Head of caudate nucleus (tissue), 42 donors: ENCODE measurements at regions of chr9 and their contacts with region 1.

Region 1: GRCh38 chr9:4366591-4367330 is 66.9 kb upstream of the GLIS3 start:
- DNase-seq: peak; percentile 29 to 87 (median 68)

Region 2: GRCh38 chr9:3746296-3747275 is 620.2 kb before region 1 on chr9:
- intact Hi-C with region 1: loop called (anchors 10 kb)
- DNase-seq: peak in 17 of 42 donors; percentile 18 to 74 (median 38)

Region 3: DNA sequence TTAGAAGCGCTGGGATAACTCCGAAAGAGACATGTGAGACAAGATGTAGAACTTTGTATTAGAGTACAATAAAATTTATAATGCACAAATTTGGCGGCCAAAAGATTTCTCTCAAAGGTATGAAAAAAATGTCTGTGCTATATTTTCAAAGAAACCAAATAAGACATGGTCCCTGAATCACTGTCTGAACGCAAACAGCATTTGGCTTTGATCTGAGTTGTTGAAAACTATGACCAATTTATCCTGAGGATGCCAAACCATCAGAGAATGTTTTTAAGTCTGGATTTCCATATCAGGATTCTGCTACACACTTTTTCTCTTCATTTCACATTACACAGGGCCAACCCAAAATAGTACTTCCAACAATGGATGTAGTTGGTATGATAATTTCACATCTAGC is 57.0 kb before region 1 on chr9:
- intact Hi-C with region 1: loop called (anchors 2 kb)
- DNase-seq: no peak